ENCODE measurements at regions of chr6 and their contacts with region 1.

Region 1: GRCh38 chr6:3052481-3053230 is 15.6 kb upstream of the RIPK1 start:
- DNase-seq: no peak
- H3K4me3 ChIP-seq: peak overlapping the region in 3 of 8 donors; percentile 46 to 71 (median 48)
- H3K27ac ChIP-seq: peak overlapping the region in 2 of 8 donors; percentile 81 to 88
- H3K4me1 ChIP-seq: peaks cover 0 to 37% (median 24%) of the 10 kb centered on the region in 6 donors
- H3K27me3 ChIP-seq: peaks cover 0 to 12% (median 0%) of the 10 kb centered on the region in 7 donors
- CTCF ChIP-seq: no peak
- POLR2A ChIP-seq: no peak

Region 2: DNA sequence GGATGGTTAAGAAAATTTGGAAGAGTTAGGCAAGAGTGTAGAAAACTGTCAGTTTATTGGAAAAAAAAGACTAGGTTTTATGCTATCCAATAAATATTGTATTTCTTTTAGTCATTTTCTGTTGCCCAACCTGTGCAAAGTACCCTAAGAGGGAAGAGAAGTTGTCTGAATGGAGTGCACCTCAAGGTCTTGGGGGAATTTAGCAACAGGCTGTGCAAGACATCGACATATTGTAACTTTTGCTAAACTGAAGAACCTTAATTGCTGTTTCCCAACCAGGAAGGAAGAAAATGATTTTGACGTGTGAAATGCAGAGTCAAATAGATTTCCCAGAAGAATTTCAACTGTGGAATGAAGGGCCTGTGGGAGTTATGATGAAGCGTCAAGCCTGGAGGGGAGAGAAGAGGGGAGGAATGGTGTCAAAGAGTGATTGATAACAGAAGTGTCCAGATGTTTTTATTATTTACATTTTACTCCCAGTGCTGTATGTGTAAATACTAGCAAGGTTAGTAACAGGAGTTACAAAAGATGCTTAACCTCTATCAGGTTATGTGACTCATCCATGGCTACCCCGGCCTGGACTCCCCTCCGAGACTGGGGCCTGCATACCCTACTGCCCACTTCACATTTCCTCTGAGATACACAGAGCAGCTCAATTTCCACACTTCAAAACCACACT is 548.7 kb before region 1 on chr6:
- intact Hi-C with region 1: no loop called
- DNase-seq: no peak
- H3K4me3 ChIP-seq: no peak overlapping the region
- H3K27ac ChIP-seq: peak overlapping the region in 5 of 8 donors; percentile 31 to 75 (median 59)
- H3K4me1 ChIP-seq: peaks cover 0 to 44% (median 7%) of the 10 kb centered on the region in 6 donors
- H3K27me3 ChIP-seq: peaks cover 0 to 52% (median 10%) of the 10 kb centered on the region in 7 donors
- CTCF ChIP-seq: no peak
- POLR2A ChIP-seq: no peak

Region 3: DNA sequence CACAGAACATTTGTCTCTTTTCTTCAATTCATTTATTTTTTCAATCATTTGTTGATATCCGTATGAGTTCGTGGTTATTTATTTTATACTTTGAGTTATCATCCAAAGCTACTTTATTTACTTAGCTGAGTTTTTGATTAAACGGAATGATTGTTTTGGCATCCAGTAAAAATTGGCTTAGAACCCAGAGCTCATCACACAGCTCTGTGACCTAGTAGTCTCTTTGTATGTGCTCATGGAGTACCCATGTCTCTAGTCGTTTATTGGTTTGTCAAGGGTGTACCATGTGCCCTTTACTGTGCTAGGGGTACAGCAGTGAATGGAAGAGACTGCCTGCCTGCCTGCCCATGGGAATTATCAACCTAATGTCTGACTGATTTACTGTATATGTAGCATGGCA is 444.2 kb before region 1 on chr6:
- intact Hi-C with region 1: no loop called
- DNase-seq: no peak
- H3K4me3 ChIP-seq: no peak overlapping the region
- H3K27ac ChIP-seq: no peak overlapping the region
- H3K4me1 ChIP-seq: no peaks in the 10 kb centered on the region
- H3K27me3 ChIP-seq: no peaks in the 10 kb centered on the region
- CTCF ChIP-seq: no peak
- POLR2A ChIP-seq: no peak

Region 4: GRCh38 chr6:2848851-2849250 is 203.8 kb before region 1 on chr6:
- intact Hi-C with region 1: loop called (anchors 5 kb)
- DNase-seq: peak; percentile 86
- H3K4me3 ChIP-seq: no peak overlapping the region
- H3K27ac ChIP-seq: peak overlapping the region in 6 of 8 donors; percentile 6 to 78 (median 56)
- H3K4me1 ChIP-seq: peaks cover 9 to 83% (median 46%) of the 10 kb centered on the region in 6 donors
- H3K27me3 ChIP-seq: no peaks in the 10 kb centered on the region
- CTCF ChIP-seq: no peak
- POLR2A ChIP-seq: no peak

Region 5: DNA sequence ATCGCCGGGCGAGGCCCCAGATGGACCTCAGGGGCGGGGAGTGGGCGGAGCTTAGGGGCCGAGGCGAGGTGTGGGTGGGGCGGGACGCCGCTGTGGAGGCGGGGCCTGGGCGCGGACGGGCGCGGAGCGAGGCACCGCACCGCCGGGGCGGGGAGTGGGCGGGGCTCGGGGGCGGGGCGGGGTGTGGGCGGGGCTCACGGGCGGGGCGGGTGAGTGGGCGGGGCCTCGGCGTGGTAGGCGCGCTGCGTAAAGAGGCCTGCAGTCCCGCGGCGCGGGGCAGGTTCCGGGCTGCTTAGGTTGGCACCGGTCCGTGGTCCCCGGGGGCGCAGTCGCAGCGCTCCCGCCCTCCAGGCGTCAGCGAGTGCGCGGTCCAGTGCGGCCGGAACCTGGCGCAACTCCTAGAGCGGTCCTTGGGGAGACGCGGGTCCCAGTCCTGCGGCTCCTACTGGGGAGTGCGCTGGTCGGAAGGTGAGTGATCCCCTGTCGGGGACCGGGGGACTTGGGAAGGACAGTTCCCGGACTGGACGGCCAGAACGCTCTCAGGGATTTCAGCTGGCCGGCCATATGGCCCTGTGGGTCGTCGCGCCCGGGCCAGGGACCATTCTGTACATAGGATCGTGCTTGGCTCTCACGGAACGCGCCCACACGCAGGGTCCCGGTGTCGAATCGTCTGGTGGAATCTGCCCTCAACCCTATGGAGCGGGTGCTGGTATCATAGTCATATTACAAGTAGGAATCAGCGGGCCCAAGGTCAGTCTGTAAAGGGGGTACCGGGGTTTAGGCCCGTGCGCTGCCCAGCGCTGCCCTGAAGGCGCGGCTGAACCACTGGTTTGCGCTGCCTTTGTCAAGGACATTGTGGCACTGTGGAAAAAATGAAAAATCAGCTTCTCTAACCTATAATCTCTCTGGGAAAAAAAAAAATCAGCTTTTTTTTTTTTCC is 52.8 kb before region 1 on chr6 and contains the start of gene NQO2:
- intact Hi-C with region 1: loop called (anchors 2 kb)
- DNase-seq: peak; percentile 98
- H3K4me3 ChIP-seq: peak within 1 kb of the TSS; percentile 59 to 94 (median 72)
- H3K27ac ChIP-seq: peak within 1 kb of the TSS; percentile 75 to 96 (median 92)
- H3K4me1 ChIP-seq: peaks cover 17 to 48% (median 36%) of the 10 kb centered on the region in 6 donors
- H3K27me3 ChIP-seq: no peaks in the 10 kb centered on the region
- CTCF ChIP-seq: peak in 3 of 11 experiments; percentile 10 to 51 (median 22)
- POLR2A ChIP-seq: peak; percentile 45 to 81 (median 74)
- total RNA-seq, gene NQO2: 21.3 to 55.1 (median 37.2) TPM